Activated naive CD4-positive, alpha-beta T cell treated with anti-CD3 and anti-CD28 coated beads for 36 hours (primary cell): ENCODE measurements at regions of chr3 and their contacts with region 1.

Region 1: GRCh38 chr3:194315088-194315964 is 35.8 kb downstream of the CPN2 start:
- DNase-seq: peak; percentile 85
- H3K4me3 Mint-ChIP-seq: peak overlapping the region; percentile 58
- H3K27ac Mint-ChIP-seq: peak overlapping the region; percentile 31
- H3K4me1 Mint-ChIP-seq: peaks cover 8% of the 10 kb centered on the region
- H3K27me3 Mint-ChIP-seq: peaks cover 15% of the 10 kb centered on the region

Region 2: DNA sequence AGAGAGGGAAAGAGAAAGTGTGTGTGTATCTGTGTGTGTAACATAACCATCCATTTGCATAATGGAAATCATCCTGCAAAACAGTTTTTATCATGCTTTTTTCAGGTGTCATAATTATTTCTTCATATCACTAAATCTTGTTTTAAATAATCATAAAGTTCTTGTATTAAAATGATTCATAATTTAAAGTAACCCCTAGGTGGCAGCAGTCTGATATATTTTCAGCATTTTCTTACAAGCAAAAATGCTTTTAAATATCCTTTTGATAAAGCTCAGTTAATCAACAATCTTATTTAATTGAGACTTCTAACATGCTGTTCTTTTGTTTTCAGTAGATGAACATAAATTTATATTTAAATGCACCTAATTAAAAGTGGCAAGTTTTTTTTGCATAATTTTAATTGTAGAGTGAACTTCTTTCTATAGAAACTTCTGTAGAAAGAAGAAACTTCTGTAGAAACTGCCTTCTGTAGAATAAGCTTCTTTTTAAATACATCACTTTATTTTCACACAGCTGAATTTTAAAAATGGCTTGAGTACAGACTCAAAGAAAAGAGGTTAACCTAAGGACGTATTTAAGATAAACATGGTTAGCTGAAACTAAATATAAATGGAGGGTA is 649.8 kb before region 1 on chr3:
- CTCF ChIA-PET with region 1: interaction called, 19 read pairs
- intact Hi-C with region 1: loop called (anchors 1 kb)
- DNase-seq: no peak
- H3K4me3 Mint-ChIP-seq: no peak overlapping the region
- H3K27ac Mint-ChIP-seq: no peak overlapping the region
- H3K4me1 Mint-ChIP-seq: no peaks in the 10 kb centered on the region
- H3K27me3 Mint-ChIP-seq: no peaks in the 10 kb centered on the region

Region 3: DNA sequence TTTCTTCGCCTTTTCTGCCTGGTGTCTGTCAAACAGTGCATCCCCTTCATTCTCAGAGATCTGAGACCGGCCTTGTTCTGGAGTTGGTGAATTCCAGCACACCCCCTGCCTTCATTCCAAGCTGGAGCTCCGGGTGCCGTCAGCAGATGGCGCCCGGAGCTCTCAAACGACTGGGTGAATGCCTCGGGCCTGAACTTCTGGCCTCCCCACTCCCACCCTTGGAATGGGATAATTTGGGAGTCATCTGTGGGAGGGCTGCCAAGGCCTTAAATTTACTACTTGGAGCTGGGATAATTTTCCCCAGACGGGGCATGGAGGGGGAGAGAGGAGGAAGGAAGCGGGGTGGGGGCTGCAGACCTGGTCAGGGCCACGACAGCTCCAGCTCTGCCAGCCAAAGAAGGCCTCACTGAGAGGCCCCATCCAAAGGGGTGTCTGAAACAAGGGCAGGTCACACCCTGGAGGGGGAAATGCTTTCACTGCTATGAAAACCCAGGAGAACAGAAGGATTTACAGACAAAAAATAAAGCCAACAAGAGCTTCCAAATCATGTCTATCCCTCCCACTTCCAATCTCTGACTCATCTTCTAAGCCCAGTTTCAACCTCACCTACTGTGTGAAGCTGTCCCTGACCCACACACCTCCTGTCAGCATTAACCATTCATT is 534.4 kb before region 1 on chr3:
- CTCF ChIA-PET with region 1: interaction called, 33 read pairs
- intact Hi-C with region 1: loop called (anchors 1 kb)
- DNase-seq: peak; percentile 49
- H3K4me3 Mint-ChIP-seq: no peak overlapping the region
- H3K27ac Mint-ChIP-seq: no peak overlapping the region
- H3K4me1 Mint-ChIP-seq: peaks cover 9% of the 10 kb centered on the region
- H3K27me3 Mint-ChIP-seq: peaks cover 25% of the 10 kb centered on the region

Region 4: DNA sequence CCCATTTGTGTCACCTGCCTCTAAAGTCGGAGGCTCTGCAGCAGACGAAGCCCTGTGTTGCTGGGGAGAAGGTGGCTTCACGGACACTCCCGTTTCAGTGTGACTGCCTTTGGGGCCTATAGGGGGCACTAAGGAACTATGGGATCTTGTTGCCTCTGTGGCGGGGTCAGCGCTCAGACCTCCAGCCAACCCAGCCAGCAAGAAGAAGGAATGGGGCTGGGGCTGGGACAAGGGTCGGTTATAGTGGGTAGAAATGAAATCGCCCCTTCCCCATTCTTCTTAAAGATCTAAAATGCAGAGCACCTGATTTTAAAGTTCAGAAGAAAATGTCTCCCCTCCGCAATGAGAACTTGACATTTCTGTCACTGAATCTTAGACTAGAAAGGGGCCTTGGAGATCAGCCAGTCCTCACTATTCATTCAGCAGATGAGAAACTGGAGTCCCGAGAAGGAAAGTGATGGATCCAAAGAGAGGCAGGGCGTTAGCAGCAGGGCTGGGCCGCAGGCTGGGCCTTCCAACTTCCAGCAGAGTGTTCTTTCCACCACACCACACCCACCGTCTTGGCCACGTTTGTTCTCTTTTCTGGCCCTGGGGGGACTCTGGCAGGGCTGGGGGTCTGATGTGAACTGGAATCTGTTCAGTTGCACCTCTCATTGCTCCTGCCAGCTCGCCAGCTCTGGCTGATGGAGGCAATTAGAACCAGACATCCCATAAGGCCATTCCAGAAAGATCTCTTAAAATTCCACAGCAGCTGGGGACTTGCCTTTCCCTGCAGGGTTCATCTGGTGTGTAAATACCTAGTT is 526.9 kb before region 1 on chr3:
- CTCF ChIA-PET with region 1: interaction called, 9 read pairs
- intact Hi-C with region 1: loop called (anchors 1 kb)
- DNase-seq: peak; percentile 49
- H3K4me3 Mint-ChIP-seq: no peak overlapping the region
- H3K27ac Mint-ChIP-seq: no peak overlapping the region
- H3K4me1 Mint-ChIP-seq: no peaks in the 10 kb centered on the region
- H3K27me3 Mint-ChIP-seq: peaks cover 7% of the 10 kb centered on the region

Region 5: DNA sequence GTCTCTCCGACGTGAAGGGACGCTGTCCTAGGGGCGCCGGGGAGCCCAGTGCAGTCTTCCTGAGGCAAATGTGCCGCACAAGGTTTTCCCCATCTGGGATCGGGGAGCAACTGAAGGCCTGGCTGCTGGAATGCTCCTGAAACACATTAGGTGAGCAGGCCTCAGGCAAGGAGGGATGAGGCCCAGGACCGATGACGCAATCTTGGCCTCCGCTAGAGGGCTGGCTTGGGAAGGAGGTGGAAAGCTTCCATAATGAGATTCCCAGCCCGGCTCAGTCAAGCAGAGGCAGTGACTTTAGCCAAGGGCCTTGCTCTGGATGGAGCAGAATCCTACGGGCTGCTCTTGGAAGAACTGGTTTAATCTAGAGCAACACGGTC is 15.0 kb before region 1 on chr3:
- CTCF ChIA-PET with region 1: interaction called, 11 read pairs
- intact Hi-C with region 1: no loop called
- DNase-seq: no peak
- H3K4me3 Mint-ChIP-seq: no peak overlapping the region
- H3K27ac Mint-ChIP-seq: no peak overlapping the region
- H3K4me1 Mint-ChIP-seq: peaks cover 8% of the 10 kb centered on the region
- H3K27me3 Mint-ChIP-seq: no peaks in the 10 kb centered on the region